Activated CD8-positive, alpha-beta T cell treated with anti-CD3 and anti-CD28 coated beads for 36 hours (primary cell): ENCODE measurements at regions of chr16 and their contacts with region 1.

Region 1: DNA sequence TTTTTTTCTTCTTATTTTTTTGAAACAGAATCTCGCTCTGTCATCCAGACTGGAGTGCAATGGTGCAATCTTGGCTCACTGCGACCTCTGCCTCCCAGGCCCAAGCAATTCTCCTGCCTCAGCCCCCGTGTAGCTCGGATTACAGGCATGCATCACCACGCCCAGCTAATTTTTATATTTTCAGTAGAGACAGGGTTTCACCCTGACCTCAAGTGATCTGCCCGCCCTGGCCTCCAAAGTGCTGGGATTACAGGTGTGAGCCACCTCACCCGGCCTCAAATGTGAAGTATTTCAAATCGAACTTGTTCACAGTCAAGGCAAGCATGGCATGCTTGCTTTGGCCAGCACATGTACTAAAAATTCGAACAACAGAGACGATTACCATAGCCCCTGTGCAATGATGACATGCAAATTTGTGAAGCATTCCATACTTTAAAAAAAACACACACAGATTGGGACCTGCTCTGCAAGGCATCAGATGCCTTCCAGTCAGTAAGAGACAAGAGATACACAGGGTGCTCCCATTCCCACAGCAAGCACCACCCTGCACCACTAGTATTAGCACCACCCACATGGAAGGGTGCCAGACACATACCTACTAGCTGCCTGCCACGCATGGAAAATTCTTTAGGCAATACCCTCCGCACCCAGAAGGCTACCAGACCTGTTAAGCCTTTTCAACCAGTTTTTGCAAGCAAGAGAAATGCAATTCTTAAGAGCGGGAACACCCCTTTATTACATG is 47.2 kb downstream of the ANKRD11 start:
- DNase-seq: peak; percentile 35
- ATAC-seq: no peak
- H3K4me3 Mint-ChIP-seq: no peak overlapping the region
- H3K27ac Mint-ChIP-seq: peak overlapping the region; percentile 23
- H3K4me1 Mint-ChIP-seq: peaks cover 89% of the 10 kb centered on the region
- H3K27me3 Mint-ChIP-seq: no peaks in the 10 kb centered on the region
- CTCF ChIP-seq: no peak

Region 2: DNA sequence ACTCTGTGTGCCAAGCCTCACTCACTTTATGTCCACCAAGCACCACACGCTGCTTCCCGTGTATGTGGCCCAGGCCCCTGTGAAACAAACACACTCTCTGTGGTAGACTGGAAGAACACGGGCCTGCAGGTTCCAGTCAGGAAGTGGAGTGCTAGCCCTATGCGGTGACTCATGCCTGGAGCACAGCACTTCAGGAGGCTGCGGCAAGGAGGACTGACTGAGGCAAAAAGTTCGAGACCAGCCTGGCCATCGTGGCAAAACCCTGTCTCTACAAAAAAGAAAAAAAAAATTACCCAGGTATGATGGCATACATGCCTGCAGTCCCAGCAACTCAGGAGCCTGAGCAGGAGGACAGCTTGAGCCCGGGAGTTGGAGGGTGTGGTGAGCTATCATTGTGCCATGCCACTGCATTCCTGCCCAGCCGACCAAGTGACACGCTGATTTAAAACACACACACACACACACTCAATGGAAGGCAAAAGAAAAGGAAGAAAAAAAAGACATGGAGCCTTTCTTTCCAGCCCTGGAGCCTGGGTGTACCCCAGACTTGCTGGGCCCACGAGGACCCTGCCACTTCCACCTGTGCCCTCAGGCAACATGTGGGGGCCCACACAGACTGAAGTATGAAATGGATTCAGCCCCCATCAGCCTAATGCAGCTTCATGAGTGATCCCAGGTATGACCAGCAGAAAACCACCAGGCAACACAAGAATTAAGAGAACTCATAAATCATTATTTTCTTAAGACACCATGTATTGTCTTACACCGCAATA is 79.4 kb before region 1 on chr16:
- CTCF ChIA-PET with region 1: no interaction called
- POLR2A ChIA-PET with region 1: no interaction called
- intact Hi-C with region 1: loop called (anchors 5 kb)
- DNase-seq: peak; percentile 64
- ATAC-seq: peak; percentile 12
- H3K4me3 Mint-ChIP-seq: no peak overlapping the region
- H3K27ac Mint-ChIP-seq: peak overlapping the region; percentile 83
- H3K4me1 Mint-ChIP-seq: peaks cover 87% of the 10 kb centered on the region
- H3K27me3 Mint-ChIP-seq: no peaks in the 10 kb centered on the region
- CTCF ChIP-seq: no peak

Region 3: DNA sequence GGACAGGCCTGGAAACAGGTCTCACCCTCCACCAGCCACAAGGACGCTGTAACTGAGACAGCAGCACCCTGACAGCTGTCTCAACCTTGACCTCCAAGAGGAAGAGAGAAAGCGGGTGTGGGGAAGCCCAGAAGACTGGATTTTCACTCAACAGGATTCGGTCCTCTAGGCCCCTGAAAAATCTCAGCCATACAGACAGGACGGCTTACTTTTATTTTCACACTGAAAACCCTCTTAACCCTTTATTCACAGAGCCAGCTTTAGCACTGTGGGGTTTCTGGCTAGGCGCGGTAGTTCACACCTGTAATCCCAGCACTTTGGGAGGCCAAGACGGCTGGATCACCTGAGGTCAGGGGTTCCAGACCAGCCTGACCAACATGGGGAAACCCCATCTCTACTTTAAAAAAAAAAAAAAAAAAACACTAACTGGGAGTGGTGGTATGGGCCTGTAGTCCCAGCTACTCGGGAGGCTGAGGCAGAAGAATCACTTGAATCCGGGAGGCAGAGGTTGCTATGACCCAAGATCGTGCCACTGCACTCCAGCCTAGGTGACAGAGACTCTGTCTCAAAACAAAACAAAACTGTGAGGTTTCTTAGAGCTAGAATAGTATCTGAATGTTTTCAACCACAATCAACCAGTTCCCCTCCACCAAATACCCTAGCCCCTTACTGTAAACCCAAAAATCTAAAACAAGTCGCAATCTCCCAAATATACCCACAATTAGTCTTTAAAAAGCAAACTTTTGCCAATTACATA is 41.9 kb after region 1 on chr16:
- CTCF ChIA-PET with region 1: no interaction called
- POLR2A ChIA-PET with region 1: interaction called, 10 read pairs
- intact Hi-C with region 1: loop called (anchors 5 kb)
- DNase-seq: peak; percentile 58
- ATAC-seq: peak; percentile 18
- H3K4me3 Mint-ChIP-seq: peak overlapping the region; percentile 57
- H3K27ac Mint-ChIP-seq: peak overlapping the region; percentile 88
- H3K4me1 Mint-ChIP-seq: peaks cover 76% of the 10 kb centered on the region
- H3K27me3 Mint-ChIP-seq: no peaks in the 10 kb centered on the region
- CTCF ChIP-seq: no peak